ENCODE measurements at regions of chr13 and their contacts with region 1.

Region 1: GRCh38 chr13:29850224-29850898 is at the start of gene UBL3:
- DNase-seq: peak; percentile 89 to 97 (median 94)
- ATAC-seq: peak; percentile 89
- H3K4me3 ChIP-seq: peak within 1 kb of the TSS; percentile 84 to 86
- H3K4me3 Mint-ChIP-seq: peak within 1 kb of the TSS; percentile 93
- H3K27ac ChIP-seq: peak within 1 kb of the TSS; percentile 90 to 96
- H3K27ac Mint-ChIP-seq: peak within 1 kb of the TSS; percentile 99
- H3K4me1 ChIP-seq: peaks cover 13% of the 10 kb centered on the region
- H3K4me1 Mint-ChIP-seq: peaks cover 24% of the 10 kb centered on the region
- H3K27me3 ChIP-seq: no peaks in the 10 kb centered on the region
- H3K27me3 Mint-ChIP-seq: no peaks in the 10 kb centered on the region
- CTCF ChIP-seq: no peak
- total RNA-seq, gene UBL3: 40.0 to 43.1 TPM

Region 2: DNA sequence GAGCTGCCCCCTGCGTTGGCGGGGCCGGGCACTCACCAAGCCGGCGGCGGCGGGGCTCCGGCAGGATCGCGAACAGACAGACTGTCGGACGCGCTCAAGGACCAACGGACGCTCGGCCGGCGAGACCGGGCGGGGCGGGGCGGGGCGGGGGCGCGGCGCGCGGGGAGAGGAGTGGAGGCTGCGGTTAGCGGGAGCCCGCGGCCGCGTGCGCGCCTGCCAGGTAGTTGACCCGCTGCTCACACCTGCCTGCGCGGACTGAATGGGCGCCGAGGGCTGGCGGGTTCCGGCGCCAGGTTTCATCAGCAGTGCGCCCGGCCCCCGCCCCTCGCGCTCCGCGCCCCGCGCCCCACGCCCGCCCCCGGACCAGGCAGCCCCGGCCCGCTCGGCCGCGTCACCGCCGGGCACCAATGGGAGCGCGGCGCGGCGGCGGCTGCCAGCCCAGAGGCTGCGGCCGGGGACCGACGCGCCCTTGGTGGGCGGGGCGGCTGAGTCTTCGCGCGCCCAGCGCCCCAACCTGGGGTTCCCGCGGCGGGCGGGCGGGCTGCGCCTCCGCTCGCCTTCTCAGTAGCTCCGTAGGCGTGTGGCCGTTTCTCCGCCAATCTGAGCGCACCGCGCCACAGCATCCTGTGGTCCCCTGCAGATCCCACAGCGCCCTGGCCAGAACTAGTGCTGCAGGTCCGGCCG is 254.8 kb before region 1 on chr13 and contains the start of gene SLC7A1:
- CTCF ChIA-PET with region 1: no interaction called
- POLR2A ChIA-PET with region 1: no interaction called
- intact Hi-C with region 1: loop called (anchors 1 to 5 kb)
- DNase-seq: peak; percentile 67 to 93 (median 79)
- ATAC-seq: peak; percentile 88
- H3K4me3 ChIP-seq: peak within 1 kb of the TSS; percentile 61 to 74
- H3K4me3 Mint-ChIP-seq: peak within 1 kb of the TSS; percentile 90
- H3K27ac ChIP-seq: peak within 1 kb of the TSS; percentile 63 to 73
- H3K27ac Mint-ChIP-seq: peak within 1 kb of the TSS; percentile 85
- H3K4me1 ChIP-seq: peaks cover 15% of the 10 kb centered on the region
- H3K4me1 Mint-ChIP-seq: peaks cover 36% of the 10 kb centered on the region
- H3K27me3 ChIP-seq: no peaks in the 10 kb centered on the region
- H3K27me3 Mint-ChIP-seq: no peaks in the 10 kb centered on the region
- CTCF ChIP-seq: no peak
- total RNA-seq, gene SLC7A1: 15.2 to 18.4 TPM

Region 3: DNA sequence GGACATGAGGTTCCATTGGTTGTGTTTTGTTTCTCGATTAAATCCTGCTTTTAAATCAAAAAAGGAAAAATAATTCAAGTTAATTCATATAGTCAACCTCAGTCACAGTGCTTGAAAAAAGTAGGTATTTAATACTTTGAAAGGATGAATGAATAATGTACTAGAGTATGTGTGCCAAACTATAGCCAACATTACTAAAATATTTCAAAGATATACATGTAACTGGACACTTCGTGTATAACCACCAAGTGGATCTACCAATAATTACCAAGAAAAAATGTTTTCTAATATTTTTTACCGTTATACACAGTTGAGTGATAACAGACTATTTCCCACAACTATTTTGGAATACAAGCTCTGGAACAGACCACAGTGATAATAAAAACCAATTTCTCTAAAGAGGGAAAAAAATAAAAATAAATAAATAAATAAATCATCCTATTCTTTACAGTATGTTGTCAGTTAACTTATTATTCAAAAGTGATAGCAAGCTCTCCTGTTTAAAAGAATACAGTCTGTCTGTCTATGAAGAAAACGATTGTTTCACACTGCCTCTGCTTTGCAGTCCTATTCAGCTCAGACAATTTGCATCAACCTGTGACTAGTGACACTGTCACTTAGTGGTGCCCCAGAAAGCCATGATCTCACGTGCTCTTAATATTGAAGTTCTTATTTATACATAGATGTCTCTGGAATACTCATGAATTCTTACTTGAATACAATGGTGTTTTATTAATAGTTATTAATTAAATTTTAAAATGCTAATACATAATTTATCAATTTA is 58.2 kb before region 1 on chr13:
- CTCF ChIA-PET with region 1: no interaction called
- POLR2A ChIA-PET with region 1: no interaction called
- intact Hi-C with region 1: no loop called
- DNase-seq: no peak
- ATAC-seq: no peak
- H3K4me3 ChIP-seq: no peak overlapping the region
- H3K4me3 Mint-ChIP-seq: no peak overlapping the region
- H3K27ac ChIP-seq: no peak overlapping the region
- H3K27ac Mint-ChIP-seq: no peak overlapping the region
- H3K4me1 ChIP-seq: peaks cover 2% of the 10 kb centered on the region
- H3K4me1 Mint-ChIP-seq: peaks cover 58% of the 10 kb centered on the region
- H3K27me3 ChIP-seq: no peaks in the 10 kb centered on the region
- H3K27me3 Mint-ChIP-seq: no peaks in the 10 kb centered on the region
- CTCF ChIP-seq: no peak

Region 4: GRCh38 chr13:29923554-29924481 is 73.5 kb after region 1 on chr13:
- CTCF ChIA-PET with region 1: interaction called, 10 read pairs
- POLR2A ChIA-PET with region 1: no interaction called
- intact Hi-C with region 1: no loop called
- DNase-seq: peak in 8 of 9 experiments; percentile 30 to 74 (median 61)
- ATAC-seq: peak; percentile 80
- H3K4me3 ChIP-seq: no peak overlapping the region
- H3K4me3 Mint-ChIP-seq: no peak overlapping the region
- H3K27ac ChIP-seq: no peak overlapping the region
- H3K27ac Mint-ChIP-seq: no peak overlapping the region
- H3K4me1 ChIP-seq: no peaks in the 10 kb centered on the region
- H3K4me1 Mint-ChIP-seq: peaks cover 17% of the 10 kb centered on the region
- H3K27me3 ChIP-seq: no peaks in the 10 kb centered on the region
- H3K27me3 Mint-ChIP-seq: no peaks in the 10 kb centered on the region
- CTCF ChIP-seq: peak; percentile 64

Region 5: DNA sequence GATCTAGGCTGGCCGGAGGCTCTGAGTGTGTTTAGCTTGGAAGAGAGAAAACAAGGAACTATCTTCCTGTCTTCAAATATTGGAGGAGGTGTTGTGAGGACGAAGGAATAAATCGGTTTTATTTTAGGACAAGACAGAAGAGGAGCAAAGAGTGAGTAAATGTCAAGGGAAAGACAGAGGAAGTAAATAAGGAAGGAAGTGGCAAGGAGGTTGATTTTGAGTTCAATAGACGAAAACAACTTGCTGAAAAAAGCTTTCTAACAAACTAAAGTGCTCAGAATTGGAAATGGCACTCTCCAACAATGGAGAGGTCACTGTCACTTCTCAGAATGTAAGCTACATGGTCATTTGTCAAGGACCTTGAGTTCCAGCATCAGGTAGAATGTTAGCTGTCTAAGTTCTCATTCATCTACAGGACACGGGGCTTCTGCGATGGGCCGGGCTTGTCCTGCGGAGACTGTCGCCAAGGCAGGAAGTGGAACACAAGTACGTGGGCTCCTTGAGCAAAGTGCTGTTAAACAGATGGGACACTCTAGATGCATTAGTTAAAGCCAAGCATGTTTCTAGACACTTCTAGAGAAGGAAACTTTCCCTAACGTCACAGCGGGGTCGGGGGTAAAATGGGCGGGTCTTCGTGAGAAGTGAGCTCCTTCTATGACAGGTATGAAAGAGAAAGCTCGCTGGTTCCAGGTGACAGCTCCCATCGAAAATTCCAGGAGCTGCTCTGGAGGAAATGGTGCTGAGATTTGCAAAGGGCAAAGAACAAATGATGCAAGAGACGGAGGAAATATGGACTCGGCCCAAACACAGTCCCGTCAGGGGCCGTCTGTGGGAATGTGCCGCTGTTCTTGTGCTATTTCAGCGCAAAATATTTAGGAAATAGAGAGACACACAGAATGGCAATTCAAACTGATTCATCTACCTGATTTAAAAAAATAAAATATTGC is 104.0 kb after region 1 on chr13:
- CTCF ChIA-PET with region 1: interaction called, 6 read pairs
- POLR2A ChIA-PET with region 1: interaction called, 11 read pairs
- intact Hi-C with region 1: no loop called
- DNase-seq: peak in 8 of 9 experiments; percentile 33 to 81 (median 58)
- ATAC-seq: peak; percentile 58
- H3K4me3 ChIP-seq: peak overlapping the region; percentile 35 to 46
- H3K4me3 Mint-ChIP-seq: peak overlapping the region; percentile 80
- H3K27ac ChIP-seq: peak overlapping the region; percentile 62 to 69
- H3K27ac Mint-ChIP-seq: peak overlapping the region; percentile 91
- H3K4me1 ChIP-seq: peaks cover 43% of the 10 kb centered on the region
- H3K4me1 Mint-ChIP-seq: peaks cover 54% of the 10 kb centered on the region
- H3K27me3 ChIP-seq: no peaks in the 10 kb centered on the region
- H3K27me3 Mint-ChIP-seq: peaks cover 2% of the 10 kb centered on the region
- CTCF ChIP-seq: no peak

Region 6: GRCh38 chr13:30371649-30372265 is 521.4 kb after region 1 on chr13:
- CTCF ChIA-PET with region 1: no interaction called
- POLR2A ChIA-PET with region 1: no interaction called
- intact Hi-C with region 1: loop called in 1 of 2 experiments (anchors 10 kb)
- DNase-seq: peak; percentile 39 to 90 (median 75)
- ATAC-seq: peak; percentile 55
- H3K4me3 ChIP-seq: peak overlapping the region; percentile 2 to 9
- H3K4me3 Mint-ChIP-seq: peak overlapping the region; percentile 67
- H3K27ac ChIP-seq: peak overlapping the region; percentile 53 to 66
- H3K27ac Mint-ChIP-seq: peak overlapping the region; percentile 94
- H3K4me1 ChIP-seq: peaks cover 77% of the 10 kb centered on the region
- H3K4me1 Mint-ChIP-seq: peaks cover 82% of the 10 kb centered on the region
- H3K27me3 ChIP-seq: no peaks in the 10 kb centered on the region
- H3K27me3 Mint-ChIP-seq: no peaks in the 10 kb centered on the region
- CTCF ChIP-seq: no peak

Region 7: GRCh38 chr13:30572859-30573275 is 722.5 kb after region 1 on chr13:
- CTCF ChIA-PET with region 1: no interaction called
- POLR2A ChIA-PET with region 1: no interaction called
- intact Hi-C with region 1: loop called in 1 of 2 experiments (anchors 5 kb)
- DNase-seq: peak in 4 of 9 experiments; percentile 12 to 72 (median 40)
- ATAC-seq: peak; percentile 57
- H3K4me3 ChIP-seq: peak overlapping the region; percentile 23 to 51
- H3K4me3 Mint-ChIP-seq: peak overlapping the region; percentile 75
- H3K27ac ChIP-seq: peak overlapping the region; percentile 58 to 72
- H3K27ac Mint-ChIP-seq: peak overlapping the region; percentile 91
- H3K4me1 ChIP-seq: peaks cover 27% of the 10 kb centered on the region
- H3K4me1 Mint-ChIP-seq: peaks cover 32% of the 10 kb centered on the region
- H3K27me3 ChIP-seq: no peaks in the 10 kb centered on the region
- H3K27me3 Mint-ChIP-seq: no peaks in the 10 kb centered on the region
- CTCF ChIP-seq: peak; percentile 44

Measured in CD8-positive, alpha-beta T cell (primary cell).